Colonic mucosa (tissue), 4 donors: ENCODE measurements at regions of chr11 and their contacts with region 1.

Region 1: DNA sequence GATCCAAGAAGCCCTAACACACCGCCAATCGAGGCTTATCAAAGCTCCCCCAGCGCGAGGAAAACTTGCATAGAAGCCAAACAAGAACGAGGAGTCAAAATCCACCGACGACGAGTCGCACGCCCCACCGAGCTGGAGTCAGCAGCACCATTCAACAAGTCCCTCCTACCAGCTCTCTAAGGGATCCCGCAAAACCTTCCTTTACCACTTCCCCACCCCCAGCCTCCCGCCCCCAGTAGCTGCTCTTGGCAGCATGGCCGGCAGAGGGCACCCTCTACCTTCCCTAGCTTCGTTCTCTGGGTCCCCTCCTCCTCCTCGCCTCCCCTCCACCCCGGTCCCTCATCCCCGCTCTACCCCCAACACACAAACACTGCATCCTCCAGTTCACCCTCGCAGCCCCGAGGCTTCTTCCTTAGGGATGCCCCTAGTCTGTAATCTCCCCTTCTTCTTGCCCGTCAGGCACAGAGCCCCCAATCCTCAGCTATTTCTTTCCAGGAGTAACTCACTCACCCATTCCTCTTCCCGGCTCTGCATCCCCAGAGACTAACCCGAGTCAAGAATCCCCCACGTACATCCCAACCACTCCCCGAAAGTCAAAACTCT is 1.3 kb downstream of the BDNF start:
- DNase-seq: peak; percentile 76
- H3K4me3 ChIP-seq: peak overlapping the region; percentile 44
- H3K27ac ChIP-seq: no peak overlapping the region
- H3K4me1 ChIP-seq: peaks cover 8% of the 10 kb centered on the region
- H3K27me3 ChIP-seq: peaks cover 27% of the 10 kb centered on the region
- CTCF ChIP-seq: peak; percentile 65

Region 2: GRCh38 chr11:28529540-28530410 is 830.8 kb after region 1 on chr11:
- intact Hi-C with region 1: loop called (anchors 2 kb)
- DNase-seq: no peak
- H3K4me3 ChIP-seq: no peak overlapping the region
- H3K27ac ChIP-seq: no peak overlapping the region
- H3K4me1 ChIP-seq: no peaks in the 10 kb centered on the region
- H3K27me3 ChIP-seq: no peaks in the 10 kb centered on the region
- CTCF ChIP-seq: no peak

Region 3: DNA sequence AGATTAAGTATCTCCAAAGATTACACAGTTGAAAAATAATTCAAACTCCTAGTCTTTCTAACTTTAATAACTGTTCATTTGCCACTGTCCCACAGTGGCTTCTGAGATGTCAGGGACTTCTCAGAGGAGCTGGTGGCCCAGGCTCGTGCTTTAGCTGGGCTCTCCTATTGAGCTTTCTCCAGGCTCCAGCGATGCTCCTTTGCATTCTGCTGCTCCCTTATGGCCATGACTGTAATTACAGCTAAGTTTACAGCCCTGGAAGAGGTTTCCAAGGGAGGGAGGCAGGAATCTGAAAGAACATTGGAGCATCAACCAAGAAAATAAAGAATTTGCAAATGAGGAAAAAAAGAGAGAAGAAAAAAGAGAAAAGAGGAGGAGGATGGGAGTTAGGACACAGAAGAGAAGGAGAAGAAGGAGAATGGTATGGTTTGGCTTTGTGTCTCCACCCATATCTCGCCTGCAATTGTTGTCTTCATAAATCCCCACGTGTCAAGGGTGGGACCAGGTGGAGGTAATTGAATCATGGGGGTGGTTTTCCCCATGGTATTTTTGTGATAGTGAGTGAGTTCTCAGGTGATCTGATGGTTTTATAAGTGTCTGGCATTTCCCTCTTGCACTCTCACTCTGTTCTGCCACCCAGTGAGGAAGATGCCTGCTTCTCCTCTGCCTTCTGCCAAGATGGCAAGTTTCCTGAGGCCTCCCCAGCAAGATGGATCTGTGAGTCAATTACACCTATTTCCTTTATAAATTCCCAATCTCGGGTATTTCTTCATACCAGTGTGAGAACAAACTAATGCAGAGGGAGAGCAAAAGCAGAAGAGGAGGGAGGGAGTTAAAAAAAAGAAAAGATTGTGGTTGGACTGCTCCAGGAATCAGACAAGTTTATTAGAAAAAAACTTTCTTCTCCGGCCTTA is 1460.8 kb after region 1 on chr11:
- intact Hi-C with region 1: loop called (anchors 5 kb)
- DNase-seq: peak; percentile 37
- H3K4me3 ChIP-seq: no peak overlapping the region
- H3K27ac ChIP-seq: no peak overlapping the region
- H3K4me1 ChIP-seq: no peaks in the 10 kb centered on the region
- H3K27me3 ChIP-seq: no peaks in the 10 kb centered on the region
- CTCF ChIP-seq: peak; percentile 52

Region 4: GRCh38 chr11:29333993-29334775 is 1635.2 kb after region 1 on chr11:
- intact Hi-C with region 1: loop called (anchors 5 kb)
- DNase-seq: no peak
- H3K4me3 ChIP-seq: no peak overlapping the region
- H3K27ac ChIP-seq: no peak overlapping the region
- H3K4me1 ChIP-seq: no peaks in the 10 kb centered on the region
- H3K27me3 ChIP-seq: no peaks in the 10 kb centered on the region
- CTCF ChIP-seq: no peak